BJ (cell line): ENCODE measurements at regions of chr7 and their contacts with region 1.

Region 1: GRCh38 chr7:76151932-76152331 is 49.8 kb upstream of the SRRM3 start:
- DNase-seq: no peak
- H3K4me3 ChIP-seq: no peak overlapping the region
- H3K27me3 ChIP-seq: peaks cover 15% of the 10 kb centered on the region
- CTCF ChIP-seq: no peak

Region 2: GRCh38 chr7:75776295-75776971 is 375.5 kb before region 1 on chr7:
- CTCF ChIA-PET with region 1: no interaction called
- POLR2A ChIA-PET with region 1: no interaction called
- DNase-seq: peak; percentile 74
- H3K4me3 ChIP-seq: no peak overlapping the region
- H3K27me3 ChIP-seq: peaks cover 10% of the 10 kb centered on the region
- CTCF ChIP-seq: no peak

Region 3: DNA sequence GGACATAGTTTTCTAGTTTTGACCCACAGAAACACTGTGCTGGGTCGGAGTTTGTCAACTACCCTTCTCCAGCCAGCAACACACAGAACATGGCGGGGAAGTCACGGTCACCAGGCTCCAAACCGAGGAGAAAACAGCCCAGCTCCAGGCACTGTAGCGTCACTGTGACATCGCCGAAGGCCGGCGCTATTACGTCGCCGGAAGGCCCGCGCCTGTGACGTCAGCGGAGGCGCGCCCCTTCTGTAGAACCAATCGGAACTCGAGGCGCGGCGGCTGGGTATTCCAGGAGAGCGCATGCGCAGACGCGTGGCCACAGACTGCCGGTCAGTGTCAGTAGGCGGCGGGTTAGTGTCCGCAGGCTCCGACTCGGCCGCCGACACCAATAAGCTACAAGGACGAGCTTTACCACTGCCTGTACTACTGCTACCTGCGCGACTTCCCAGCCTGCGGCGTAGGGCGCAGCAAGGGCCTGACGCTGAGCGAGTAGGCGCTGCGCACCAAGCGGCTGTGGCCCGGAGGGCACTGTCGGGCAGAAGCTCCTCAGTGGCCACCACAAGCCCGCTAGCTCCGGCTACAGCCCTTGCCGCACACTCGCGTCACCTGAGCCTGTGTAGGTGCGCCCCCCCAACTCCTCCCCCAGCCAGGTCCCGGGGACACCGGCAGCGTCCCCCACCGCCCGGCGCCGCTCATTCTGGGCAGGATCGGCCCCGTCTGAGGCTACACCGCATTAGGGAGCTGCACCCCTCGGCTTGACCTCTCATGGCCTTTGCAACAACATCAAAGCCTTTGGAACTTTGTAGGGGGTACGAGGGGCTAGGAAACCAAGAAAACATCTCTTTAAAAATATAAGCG is 14.7 kb after region 1 on chr7:
- CTCF ChIA-PET with region 1: no interaction called
- POLR2A ChIA-PET with region 1: interaction called, 15 read pairs
- DNase-seq: peak; percentile 61
- H3K4me3 ChIP-seq: peak overlapping the region; percentile 69
- H3K27me3 ChIP-seq: no peaks in the 10 kb centered on the region
- CTCF ChIP-seq: peak; percentile 41; the same call in 1 of the 2 replicates